PC-9 (cell line): ENCODE measurements at regions of chr10 and their contacts with region 1.

Region 1: GRCh38 chr10:71534568-71535194 is 138.0 kb downstream of the CDH23 start:
- DNase-seq: no peak
- H3K4me3 ChIP-seq: no peak overlapping the region
- H3K27ac ChIP-seq: no peak overlapping the region
- H3K4me1 ChIP-seq: no peaks in the 10 kb centered on the region
- H3K27me3 ChIP-seq: no peaks in the 10 kb centered on the region; the same call in 1 of the 2 replicates
- CTCF ChIP-seq: no peak

Region 2: GRCh38 chr10:71804077-71804476 is 269.4 kb after region 1 on chr10:
- CTCF ChIA-PET with region 1: no interaction called
- POLR2A ChIA-PET with region 1: interaction called, 16 read pairs
- intact Hi-C with region 1: no loop called
- DNase-seq: no peak
- H3K4me3 ChIP-seq: no peak overlapping the region
- H3K27ac ChIP-seq: no peak overlapping the region
- H3K4me1 ChIP-seq: no peaks in the 10 kb centered on the region
- H3K27me3 ChIP-seq: peaks cover 9% of the 10 kb centered on the region; the same call in 1 of the 2 replicates
- CTCF ChIP-seq: no peak